ENCODE measurements at regions of chr17 and their contacts with region 1.

Region 1: GRCh38 chr17:14118951-14119350 is 49.6 kb downstream of the COX10 start:
- DNase-seq: no peak
- H3K4me3 Mint-ChIP-seq: peak overlapping the region; percentile 30
- H3K27ac Mint-ChIP-seq: peak overlapping the region; percentile 96
- H3K4me1 Mint-ChIP-seq: peaks cover 89% of the 10 kb centered on the region
- H3K27me3 Mint-ChIP-seq: no peaks in the 10 kb centered on the region

Region 2: DNA sequence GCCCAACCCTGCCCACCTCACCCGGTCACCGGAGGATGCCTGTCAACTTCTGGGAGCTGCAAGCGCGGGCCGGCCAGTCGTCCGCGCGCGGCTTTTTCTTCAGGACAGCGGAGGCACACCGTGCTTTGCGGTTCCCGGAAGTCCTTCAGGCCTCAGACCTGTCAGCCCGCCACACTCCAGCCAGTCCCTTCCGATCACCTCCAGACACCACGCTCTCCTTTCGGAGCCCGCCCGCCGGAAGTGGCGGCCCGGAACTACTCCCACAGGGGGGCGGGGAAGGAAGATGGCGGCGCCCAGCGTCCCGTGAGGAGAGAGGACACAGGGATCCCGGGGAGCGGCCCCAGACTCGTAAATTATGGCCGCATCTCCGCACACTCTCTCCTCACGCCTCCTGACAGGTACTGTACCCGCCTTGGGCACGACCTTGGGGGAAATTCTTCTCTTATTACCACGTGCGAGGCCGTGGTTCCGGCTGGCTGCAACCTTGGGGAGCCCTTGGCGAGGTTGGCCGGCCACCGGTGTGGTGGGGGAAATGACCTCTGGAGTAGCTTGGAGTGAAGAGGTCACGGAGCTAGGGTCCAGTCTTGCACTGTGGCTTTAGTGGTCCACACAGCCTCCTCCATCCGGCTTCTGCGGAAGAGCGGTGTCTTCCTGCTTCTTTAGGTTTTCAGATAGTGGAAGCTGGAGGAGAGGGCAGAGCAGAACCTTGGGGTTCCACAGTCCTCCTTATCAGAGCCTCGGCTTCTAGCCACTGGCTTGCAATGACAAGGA is 49.5 kb before region 1 on chr17 and contains the start of gene COX10:
- CTCF ChIA-PET with region 1: no interaction called
- POLR2A ChIA-PET with region 1: no interaction called
- intact Hi-C with region 1: loop called (anchors 1 kb)
- DNase-seq: peak; percentile 90
- H3K4me3 Mint-ChIP-seq: peak within 1 kb of the TSS; percentile 98
- H3K27ac Mint-ChIP-seq: peak within 1 kb of the TSS; percentile 89
- H3K4me1 Mint-ChIP-seq: peaks cover 58% of the 10 kb centered on the region
- H3K27me3 Mint-ChIP-seq: no peaks in the 10 kb centered on the region
- total RNA-seq, gene COX10: 22.9 to 23.6 TPM

Region 3: GRCh38 chr17:14091367-14091766 is 27.6 kb before region 1 on chr17:
- CTCF ChIA-PET with region 1: no interaction called
- POLR2A ChIA-PET with region 1: no interaction called
- intact Hi-C with region 1: no loop called
- DNase-seq: no peak
- H3K4me3 Mint-ChIP-seq: no peak overlapping the region
- H3K27ac Mint-ChIP-seq: no peak overlapping the region
- H3K4me1 Mint-ChIP-seq: peaks cover 50% of the 10 kb centered on the region
- H3K27me3 Mint-ChIP-seq: no peaks in the 10 kb centered on the region

Region 4: DNA sequence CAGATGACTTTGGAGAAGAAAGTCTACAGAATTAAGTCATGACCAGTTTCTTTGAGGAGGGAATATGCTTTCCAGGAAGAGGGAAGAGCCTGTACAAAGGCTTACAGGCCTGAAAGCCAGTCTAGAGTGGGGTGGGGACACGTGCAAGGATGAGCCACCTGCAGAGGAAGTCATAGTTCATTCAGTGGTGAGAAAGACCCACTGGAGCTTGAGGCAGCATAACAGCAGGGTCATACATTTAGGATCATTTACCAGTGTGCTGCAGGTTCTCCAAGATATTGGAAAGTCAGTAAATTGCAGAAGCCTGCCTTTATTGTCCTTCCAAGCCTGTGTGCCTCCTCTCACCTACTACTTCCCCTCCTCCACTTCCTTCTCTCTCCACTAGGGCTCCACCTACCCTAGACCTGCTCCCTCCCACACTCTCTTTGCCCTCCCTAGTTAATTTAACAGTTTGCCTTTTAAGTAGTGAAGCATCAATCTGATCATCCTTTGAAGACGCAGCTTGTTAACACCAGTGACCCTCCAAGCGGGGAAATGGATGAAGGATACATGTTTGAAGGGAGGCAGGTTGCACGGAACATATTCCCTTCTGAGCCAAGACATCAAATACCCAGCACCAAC is 77.5 kb after region 1 on chr17:
- CTCF ChIA-PET with region 1: no interaction called
- POLR2A ChIA-PET with region 1: no interaction called
- intact Hi-C with region 1: loop called (anchors 1 kb)
- DNase-seq: no peak
- H3K4me3 Mint-ChIP-seq: peak overlapping the region; percentile 34
- H3K27ac Mint-ChIP-seq: peak overlapping the region; percentile 85
- H3K4me1 Mint-ChIP-seq: peaks cover 83% of the 10 kb centered on the region
- H3K27me3 Mint-ChIP-seq: no peaks in the 10 kb centered on the region

Region 5: DNA sequence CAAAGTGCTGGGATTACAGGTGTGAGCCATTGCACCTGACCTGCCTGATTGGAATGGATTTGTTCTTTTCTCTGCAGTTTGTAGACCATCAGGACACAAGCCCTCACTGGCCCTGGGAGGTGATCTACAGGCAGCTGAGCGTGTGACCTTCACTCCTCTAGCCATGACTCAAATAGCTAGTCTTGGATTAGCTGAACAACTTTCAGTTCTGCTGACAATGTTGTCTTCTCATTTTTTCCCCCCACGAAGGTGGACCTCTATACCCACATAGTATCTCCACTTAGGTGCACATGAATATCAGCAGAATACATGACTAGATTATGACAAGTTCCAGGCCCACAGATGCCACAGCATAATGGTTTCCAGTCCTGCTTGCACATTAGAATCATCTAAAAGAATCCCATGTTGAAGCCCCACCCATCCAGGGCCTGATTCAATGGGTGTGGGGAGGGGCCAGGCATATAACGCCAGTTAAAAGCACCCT is 218.7 kb after region 1 on chr17:
- CTCF ChIA-PET with region 1: no interaction called
- POLR2A ChIA-PET with region 1: no interaction called
- intact Hi-C with region 1: loop called (anchors 10 kb)
- DNase-seq: peak; percentile 85
- H3K4me3 Mint-ChIP-seq: no peak overlapping the region
- H3K27ac Mint-ChIP-seq: peak overlapping the region; percentile 74
- H3K4me1 Mint-ChIP-seq: peaks cover 84% of the 10 kb centered on the region
- H3K27me3 Mint-ChIP-seq: no peaks in the 10 kb centered on the region

Region 6: GRCh38 chr17:14359163-14360020 is 240.4 kb after region 1 on chr17:
- CTCF ChIA-PET with region 1: no interaction called
- POLR2A ChIA-PET with region 1: no interaction called
- intact Hi-C with region 1: no loop called
- DNase-seq: peak; percentile 77
- H3K4me3 Mint-ChIP-seq: no peak overlapping the region
- H3K27ac Mint-ChIP-seq: no peak overlapping the region
- H3K4me1 Mint-ChIP-seq: peaks cover 13% of the 10 kb centered on the region
- H3K27me3 Mint-ChIP-seq: no peaks in the 10 kb centered on the region

Measured in activated CD4-positive, alpha-beta memory T cell treated with anti-CD3 and anti-CD28 coated beads for 36 hours (primary cell).